SK-N-SH (cell line): ENCODE measurements at regions of chr6 and their contacts with region 1.

Region 1: DNA sequence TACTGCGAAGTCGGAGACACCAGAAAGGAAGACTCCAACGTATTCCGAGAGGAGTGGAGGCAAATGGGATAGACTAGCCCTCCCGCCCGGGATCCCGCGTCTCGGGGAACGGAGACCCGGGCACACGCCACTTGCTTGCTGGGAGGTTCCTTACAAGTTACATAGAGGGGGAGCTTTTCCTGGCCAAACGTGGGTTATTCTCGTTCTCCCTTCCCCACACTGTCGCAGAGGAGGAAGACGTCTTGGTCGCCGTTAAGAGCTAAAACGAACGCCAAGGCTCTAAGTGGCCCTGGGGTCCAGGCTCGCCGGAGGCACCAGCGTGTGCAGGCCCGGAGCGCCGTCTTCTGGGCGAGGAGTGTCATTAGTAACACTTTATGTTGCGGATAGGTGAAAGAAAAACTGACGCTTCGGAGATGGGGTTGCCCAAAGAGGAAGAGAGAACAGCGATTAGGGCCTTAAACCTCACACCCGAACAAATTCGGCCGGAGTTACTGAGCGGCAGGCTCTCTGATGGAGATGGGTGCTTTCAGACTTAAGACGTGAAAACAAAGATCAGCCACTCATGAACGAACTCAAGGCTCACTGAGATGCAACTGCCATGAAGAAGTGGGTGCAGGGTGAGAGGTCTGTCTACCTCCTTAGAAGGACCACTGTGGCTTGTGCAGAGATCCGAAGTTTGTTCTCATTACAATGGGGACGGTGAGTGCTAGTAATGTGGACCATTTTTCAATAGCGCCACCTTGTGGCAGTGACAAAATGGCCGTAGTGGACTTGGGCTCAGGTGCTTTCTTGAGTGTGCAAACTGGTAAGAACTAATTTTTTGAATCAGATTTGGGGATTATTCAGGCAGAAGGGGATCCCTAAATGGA is 11.7 kb upstream of the ZNF311 start:
- DNase-seq: peak; percentile 72
- H3K4me3 ChIP-seq: peak overlapping the region; percentile 61 to 64
- H3K27ac ChIP-seq: no peak overlapping the region
- H3K4me1 ChIP-seq: peaks cover 0 to 10% of the 10 kb centered on the region in 2 experiments; a peak in 2 of 4 replicates
- H3K27me3 ChIP-seq: no peaks in the 10 kb centered on the region; the same call in 1 of the 2 replicates
- CTCF ChIP-seq: peak; percentile 94
- EP300 ChIP-seq: no peak
- RAD21 ChIP-seq: peak; percentile 71

Region 2: DNA sequence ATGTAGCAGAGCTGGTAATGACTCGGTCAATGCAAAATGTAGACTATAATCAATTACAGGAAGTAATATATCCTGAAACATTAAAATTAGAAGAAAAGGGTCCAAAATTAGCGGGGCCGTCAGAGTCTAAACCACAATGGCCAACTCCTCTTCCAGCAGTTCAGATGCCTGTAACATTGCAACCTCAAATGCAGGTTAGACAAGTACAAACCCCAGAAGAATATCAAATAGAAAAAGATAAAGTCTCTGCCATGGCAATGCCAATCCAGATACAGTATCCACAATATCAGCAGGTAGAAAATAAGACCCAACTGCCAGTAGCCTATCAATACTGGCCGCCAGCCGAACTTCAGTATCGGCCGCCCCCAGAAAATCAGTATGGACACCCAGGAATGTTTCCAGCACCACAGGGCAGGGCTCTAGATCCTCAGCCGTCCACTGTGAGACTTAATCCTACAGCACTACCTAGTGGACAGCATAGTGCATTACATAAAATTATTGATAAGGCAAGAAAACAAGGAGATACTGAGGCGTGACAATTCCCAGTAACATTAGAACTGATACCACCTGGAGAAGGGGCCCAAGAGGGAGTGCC is 332.8 kb before region 1 on chr6:
- CTCF ChIA-PET with region 1: interaction called, 12 read pairs
- POLR2A ChIA-PET with region 1: no interaction called
- DNase-seq: peak; percentile 52
- H3K4me3 ChIP-seq: peak overlapping the region in 1 of 2 experiments; percentile 39; a peak in 1 of 4 replicates
- H3K27ac ChIP-seq: no peak overlapping the region
- H3K4me1 ChIP-seq: 0 out of 4 replicates have a peak, but pooled peaks cover 0 to 6% of the 10 kb centered on the region in 2 experiments
- H3K27me3 ChIP-seq: peaks cover 38% of the 10 kb centered on the region
- CTCF ChIP-seq: peak; percentile 74
- EP300 ChIP-seq: no peak
- RAD21 ChIP-seq: peak; percentile 85

Region 3: DNA sequence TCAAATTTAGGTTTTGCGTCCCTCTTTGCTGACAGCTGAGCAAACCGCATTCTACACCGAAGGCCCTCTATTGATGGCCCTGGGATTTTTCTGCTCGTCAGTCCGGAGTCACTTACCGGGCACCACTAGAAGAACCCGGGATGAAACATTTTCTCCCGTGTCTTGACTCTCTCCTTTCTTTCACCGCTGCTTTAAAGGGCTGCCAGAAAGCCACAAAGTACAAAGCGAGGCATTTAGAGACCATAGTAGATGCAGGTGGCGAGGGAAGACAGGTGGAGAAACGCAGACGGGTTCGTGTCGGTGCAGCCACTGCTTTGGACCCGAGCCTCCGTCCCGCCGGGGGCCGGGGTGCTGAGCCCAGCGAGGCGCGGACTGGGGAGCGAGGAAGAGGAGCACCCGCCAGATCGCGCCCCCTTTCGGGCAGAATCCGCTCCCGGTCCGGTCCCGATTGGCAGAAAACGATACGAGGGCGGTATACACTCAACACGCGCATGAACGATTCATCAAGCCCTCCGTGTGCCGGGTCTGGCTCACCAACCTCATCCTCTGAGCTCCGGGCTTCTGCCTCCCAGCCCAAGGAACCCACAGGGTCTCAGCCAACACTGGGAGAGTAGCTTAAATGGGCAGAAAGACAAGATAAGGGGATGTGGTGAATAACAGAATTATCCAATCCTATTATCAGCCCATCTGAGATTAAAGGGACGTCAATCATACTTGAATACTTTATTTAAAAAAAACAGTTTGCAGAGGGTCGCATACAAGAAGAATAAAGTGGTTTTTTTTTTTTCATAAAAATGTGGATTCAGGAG is 178.0 kb before region 1 on chr6:
- CTCF ChIA-PET with region 1: interaction called, 25 read pairs
- POLR2A ChIA-PET with region 1: no interaction called
- DNase-seq: peak; percentile 80
- H3K4me3 ChIP-seq: peak overlapping the region; percentile 77 to 92
- H3K27ac ChIP-seq: peak overlapping the region; percentile 52 to 56; a peak in 3 of 4 replicates
- H3K4me1 ChIP-seq: peaks cover 5 to 6% of the 10 kb centered on the region in 2 experiments; a peak in 2 of 4 replicates
- H3K27me3 ChIP-seq: peaks cover 16% of the 10 kb centered on the region; the same call in 1 of the 2 replicates
- CTCF ChIP-seq: peak; percentile 79
- EP300 ChIP-seq: no peak
- RAD21 ChIP-seq: no peak

Region 4: GRCh38 chr6:28981833-28982475 is 34.8 kb before region 1 on chr6:
- CTCF ChIA-PET with region 1: interaction called, 32 read pairs
- POLR2A ChIA-PET with region 1: no interaction called
- DNase-seq: peak; percentile 55
- H3K4me3 ChIP-seq: peak overlapping the region; percentile 91 to 100
- H3K27ac ChIP-seq: peak overlapping the region; percentile 66 to 68
- H3K4me1 ChIP-seq: peaks cover 0 to 9% of the 10 kb centered on the region in 2 experiments; a peak in 1 of 4 replicates
- H3K27me3 ChIP-seq: no peaks in the 10 kb centered on the region
- CTCF ChIP-seq: no peak
- EP300 ChIP-seq: 0 out of 4 replicates have a peak, but pooled peaks of 1 of the 2 experiments have one; percentile 31
- RAD21 ChIP-seq: no peak

Region 5: DNA sequence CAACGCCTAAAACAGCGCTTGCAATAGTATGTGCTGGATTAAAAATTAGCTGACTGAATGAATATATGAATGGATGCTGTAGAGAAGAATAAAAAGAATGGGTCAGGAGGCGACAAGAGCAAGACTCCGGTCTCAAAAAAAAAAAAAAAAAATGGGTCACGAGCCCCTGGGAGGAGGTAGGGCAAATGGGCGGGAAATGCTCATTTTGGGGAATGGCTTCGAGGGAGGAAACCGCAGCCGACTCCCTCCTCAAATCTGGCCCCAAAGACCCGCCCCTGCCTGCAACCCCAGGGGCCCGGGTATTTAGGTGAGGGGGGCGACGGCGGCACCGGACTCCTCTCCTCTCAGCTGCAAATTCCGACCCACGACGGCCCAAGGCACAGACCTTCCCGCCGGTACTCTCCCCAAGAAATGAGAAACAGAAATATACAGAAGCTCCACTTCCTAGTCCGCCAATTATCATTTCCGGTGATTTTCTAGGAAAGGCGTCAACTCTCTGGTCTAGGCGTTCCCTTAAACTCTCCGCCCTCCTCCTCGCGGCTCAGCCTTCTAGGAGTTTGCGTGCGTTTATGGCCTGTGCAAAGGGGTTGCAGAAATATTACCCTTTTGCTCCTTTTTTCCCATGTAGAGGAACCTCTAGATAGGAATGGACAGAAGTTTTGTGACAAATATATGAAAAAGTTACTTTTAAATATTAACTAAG is 11.5 kb before region 1 on chr6 and contains the start of gene ZNF311:
- CTCF ChIA-PET with region 1: interaction called, 14 read pairs
- POLR2A ChIA-PET with region 1: no interaction called
- DNase-seq: peak; percentile 36
- H3K4me3 ChIP-seq: peak within 1 kb of the TSS; percentile 36 to 50; a peak in 3 of 4 replicates
- H3K27ac ChIP-seq: no peak within 1 kb of the TSS
- H3K4me1 ChIP-seq: no peaks in the 10 kb centered on the region
- H3K27me3 ChIP-seq: peaks cover 12% of the 10 kb centered on the region; the same call in 1 of the 2 replicates
- CTCF ChIP-seq: no peak
- EP300 ChIP-seq: no peak
- RAD21 ChIP-seq: no peak
- polyA plus RNA-seq, gene ZNF311: 0.16 and 0.21 TPM in 2 replicates

Region 6: GRCh38 chr6:29028821-29029220 is 12.0 kb after region 1 on chr6:
- CTCF ChIA-PET with region 1: interaction called, 22 read pairs
- POLR2A ChIA-PET with region 1: no interaction called
- DNase-seq: no peak
- H3K4me3 ChIP-seq: no peak overlapping the region
- H3K27ac ChIP-seq: no peak overlapping the region
- H3K4me1 ChIP-seq: no peaks in the 10 kb centered on the region
- H3K27me3 ChIP-seq: peaks cover 6% of the 10 kb centered on the region; the same call in 1 of the 2 replicates
- CTCF ChIP-seq: no peak
- EP300 ChIP-seq: no peak
- RAD21 ChIP-seq: no peak

Region 7: GRCh38 chr6:29045075-29045474 is 28.3 kb after region 1 on chr6 and contains the start of gene OR2W1:
- CTCF ChIA-PET with region 1: no interaction called
- POLR2A ChIA-PET with region 1: no interaction called
- DNase-seq: no peak
- H3K4me3 ChIP-seq: no peak within 1 kb of the TSS
- H3K27ac ChIP-seq: no peak within 1 kb of the TSS
- H3K4me1 ChIP-seq: no peaks in the 10 kb centered on the region
- H3K27me3 ChIP-seq: no peaks in the 10 kb centered on the region
- CTCF ChIP-seq: no peak
- EP300 ChIP-seq: no peak
- RAD21 ChIP-seq: no peak
- polyA plus RNA-seq, gene OR2W1: not detected in 2 replicates

Region 8: DNA sequence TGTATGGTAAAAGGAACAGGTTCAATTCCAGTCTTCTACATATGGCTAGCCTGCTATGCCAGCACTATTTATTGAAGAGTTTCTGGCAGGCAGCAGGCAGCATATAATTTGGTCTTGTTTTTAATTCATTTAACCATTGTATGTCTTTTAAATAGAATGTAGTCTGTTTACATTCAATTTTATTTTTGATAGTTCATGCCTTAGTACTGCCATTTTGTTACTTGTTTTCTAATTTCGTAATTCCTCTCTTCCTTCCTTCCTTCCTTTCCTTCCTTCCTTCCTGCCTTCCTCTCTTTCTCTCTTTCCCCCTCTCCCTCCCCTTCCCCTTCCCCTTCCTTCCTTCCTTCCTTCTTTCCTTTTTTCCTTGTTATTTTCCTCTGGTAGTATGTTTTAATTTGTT is 136.3 kb after region 1 on chr6:
- CTCF ChIA-PET with region 1: no interaction called
- POLR2A ChIA-PET with region 1: no interaction called
- DNase-seq: no peak
- H3K4me3 ChIP-seq: no peak overlapping the region
- H3K27ac ChIP-seq: no peak overlapping the region
- H3K4me1 ChIP-seq: no peaks in the 10 kb centered on the region
- H3K27me3 ChIP-seq: no peaks in the 10 kb centered on the region
- CTCF ChIP-seq: no peak
- EP300 ChIP-seq: no peak
- RAD21 ChIP-seq: no peak

Region 9: GRCh38 chr6:29200767-29201662 is 184.2 kb after region 1 on chr6:
- CTCF ChIA-PET with region 1: no interaction called
- POLR2A ChIA-PET with region 1: no interaction called
- DNase-seq: no peak
- H3K4me3 ChIP-seq: no peak overlapping the region
- H3K27ac ChIP-seq: no peak overlapping the region
- H3K4me1 ChIP-seq: no peaks in the 10 kb centered on the region
- H3K27me3 ChIP-seq: no peaks in the 10 kb centered on the region
- CTCF ChIP-seq: no peak
- EP300 ChIP-seq: no peak
- RAD21 ChIP-seq: no peak

Region 10: DNA sequence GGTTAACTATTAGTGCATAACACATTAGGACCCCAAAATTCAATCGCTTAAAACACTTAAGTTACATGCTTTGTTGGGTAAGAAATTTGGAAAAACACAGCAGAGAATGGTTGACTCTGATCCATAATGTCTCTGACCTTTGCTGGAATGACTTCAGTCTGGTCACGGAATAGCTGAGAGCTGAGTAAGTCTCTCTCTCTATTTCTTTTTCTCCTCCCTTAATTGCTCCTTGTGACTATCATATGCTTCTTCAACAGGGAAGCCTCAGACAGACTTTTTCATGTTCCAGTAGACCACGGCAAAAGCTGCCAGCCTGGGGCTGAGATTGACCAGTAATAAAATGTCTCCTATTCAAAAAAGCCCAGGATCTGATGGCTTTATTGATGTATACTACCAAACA is 402.7 kb after region 1 on chr6:
- CTCF ChIA-PET with region 1: no interaction called
- POLR2A ChIA-PET with region 1: no interaction called
- DNase-seq: no peak
- H3K4me3 ChIP-seq: no peak overlapping the region
- H3K27ac ChIP-seq: no peak overlapping the region
- H3K4me1 ChIP-seq: no peaks in the 10 kb centered on the region
- H3K27me3 ChIP-seq: peaks cover 6% of the 10 kb centered on the region
- CTCF ChIP-seq: no peak
- EP300 ChIP-seq: no peak
- RAD21 ChIP-seq: no peak